Activated CD4-positive, alpha-beta T cell treated with anti-CD3 and anti-CD28 coated beads for 36 hours (primary cell): ENCODE measurements at regions of chr12 and their contacts with region 1.

Region 1: DNA sequence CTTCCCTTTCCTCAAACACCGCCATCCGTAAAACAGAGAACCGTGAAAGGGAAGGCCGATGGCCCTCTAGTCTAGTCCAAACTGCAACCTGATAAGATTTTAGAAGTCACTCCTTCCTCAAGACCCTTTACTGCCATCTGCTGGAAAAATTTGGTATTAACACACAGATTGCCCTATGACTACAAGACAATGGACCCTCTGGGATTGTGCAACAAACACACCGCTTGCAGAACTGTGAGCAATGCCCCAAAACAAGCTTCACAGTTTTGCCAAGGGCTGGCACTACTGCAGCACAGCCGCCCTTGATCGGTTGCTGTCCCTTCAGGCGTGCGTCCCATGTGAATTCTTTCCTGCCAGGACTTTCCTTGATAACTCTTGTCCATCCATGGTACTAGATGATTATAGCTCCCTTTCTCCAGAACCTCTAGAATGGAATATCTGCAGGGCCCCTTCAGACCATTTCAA is 23.1 kb downstream of the LLPH start:
- DNase-seq: peak; percentile 51
- ATAC-seq: peak; percentile 92
- H3K4me3 Mint-ChIP-seq: no peak overlapping the region
- H3K27ac Mint-ChIP-seq: no peak overlapping the region
- H3K4me1 Mint-ChIP-seq: peaks cover 2% of the 10 kb centered on the region
- H3K27me3 Mint-ChIP-seq: peaks cover 10% of the 10 kb centered on the region

Region 2: DNA sequence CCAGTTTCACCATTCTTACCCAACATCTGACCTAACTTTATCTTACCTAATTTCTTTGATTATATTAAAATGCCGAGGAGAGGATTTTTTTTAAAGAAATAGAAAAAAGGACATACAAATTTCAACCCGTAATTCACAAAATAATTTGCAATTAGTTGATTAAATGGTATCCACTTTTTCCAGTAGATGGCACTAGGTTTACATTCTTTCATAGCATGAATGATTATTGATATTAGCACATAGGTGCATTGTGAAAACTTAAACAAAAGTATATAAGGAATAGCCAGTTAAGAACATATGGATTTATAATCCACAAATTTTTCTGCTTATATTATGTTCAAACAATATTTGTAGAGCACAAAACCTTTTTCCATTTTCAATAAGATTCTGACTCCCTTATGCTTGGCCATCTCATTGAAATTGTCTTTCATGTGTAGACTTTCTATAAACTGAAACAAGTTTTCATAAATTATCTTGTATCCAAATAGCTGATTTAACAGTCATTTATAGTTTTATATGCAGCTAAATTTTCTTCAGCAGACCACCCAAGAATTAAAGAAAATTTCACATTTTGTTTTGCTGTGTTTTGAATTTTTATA is 793.7 kb before region 1 on chr12:
- CTCF ChIA-PET with region 1: no interaction called
- POLR2A ChIA-PET with region 1: no interaction called
- intact Hi-C with region 1: loop called (anchors 5 kb)
- DNase-seq: no peak
- ATAC-seq: no peak
- H3K4me3 Mint-ChIP-seq: no peak overlapping the region
- H3K27ac Mint-ChIP-seq: no peak overlapping the region
- H3K4me1 Mint-ChIP-seq: no peaks in the 10 kb centered on the region
- H3K27me3 Mint-ChIP-seq: no peaks in the 10 kb centered on the region

Region 3: DNA sequence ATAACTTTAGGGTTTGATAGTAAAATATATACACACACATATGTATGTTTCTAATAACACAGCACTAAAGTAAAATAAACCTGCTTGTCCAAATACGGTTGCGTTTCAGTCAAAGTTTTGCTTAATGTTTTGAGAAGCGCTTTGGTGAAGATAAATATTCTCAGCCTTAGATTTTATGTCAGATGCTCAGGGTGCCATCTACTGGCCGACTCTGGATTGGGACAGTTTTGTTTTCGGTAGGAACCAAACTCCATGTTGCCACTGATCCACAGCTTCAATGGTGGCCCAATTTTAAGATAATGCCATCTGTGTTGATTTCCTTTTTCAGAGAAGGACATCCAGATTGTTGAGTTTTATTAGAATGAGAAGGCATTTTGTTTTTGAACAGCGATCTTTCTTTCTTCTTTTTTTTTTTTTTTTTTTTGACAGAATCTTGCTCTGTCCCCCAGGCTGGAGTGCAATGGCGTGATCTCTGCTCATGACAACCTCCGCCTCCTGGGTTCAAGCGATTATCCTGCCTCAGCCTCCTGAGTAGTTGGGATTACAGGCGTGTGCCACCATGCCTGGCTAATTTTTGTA is 20.0 kb before region 1 on chr12:
- CTCF ChIA-PET with region 1: interaction called, 4 read pairs
- POLR2A ChIA-PET with region 1: no interaction called
- intact Hi-C with region 1: loop called in 1 of 2 experiments (anchors 1 kb)
- DNase-seq: peak; percentile 76
- ATAC-seq: peak; percentile 60
- H3K4me3 Mint-ChIP-seq: no peak overlapping the region
- H3K27ac Mint-ChIP-seq: no peak overlapping the region
- H3K4me1 Mint-ChIP-seq: no peaks in the 10 kb centered on the region
- H3K27me3 Mint-ChIP-seq: peaks cover 15% of the 10 kb centered on the region